ENCODE measurements at regions of chr18 and their contacts with region 1.

Region 1: DNA sequence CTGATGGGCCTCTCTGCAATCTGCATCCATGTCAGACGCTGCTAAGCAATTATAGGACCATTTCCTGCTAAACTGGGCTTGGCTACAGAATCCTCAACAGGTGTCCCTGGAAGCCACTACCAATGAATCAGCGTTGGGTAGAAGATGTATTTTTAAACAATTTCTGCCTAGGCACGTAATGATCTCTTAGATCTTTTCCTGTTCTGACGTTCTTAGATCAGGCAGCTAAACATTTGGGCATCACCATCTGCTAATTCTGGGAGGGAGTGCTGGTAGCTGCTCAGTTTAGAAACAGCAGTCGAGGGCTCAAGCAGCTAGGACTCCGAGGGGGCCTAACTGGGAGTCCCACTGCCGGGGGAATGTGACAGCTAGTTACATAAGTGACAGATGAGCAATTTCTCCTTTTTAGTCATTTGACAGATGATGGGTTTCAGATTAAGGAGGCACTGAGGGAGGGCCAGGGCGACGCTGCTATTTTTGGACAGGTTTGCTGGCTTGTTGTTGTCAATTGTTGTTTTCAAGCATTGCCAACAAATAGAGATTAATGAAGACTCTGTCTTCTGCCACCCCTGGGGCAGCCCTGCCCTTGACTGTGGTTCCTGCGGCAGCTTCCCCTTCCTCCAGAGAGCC is 92.7 kb downstream of the MRO start:
- DNase-seq: no peak
- ATAC-seq: no peak
- H3K4me3 ChIP-seq: no peak overlapping the region
- H3K27ac ChIP-seq: no peak overlapping the region
- H3K4me1 ChIP-seq: no peaks in the 10 kb centered on the region
- H3K27me3 ChIP-seq: no peaks in the 10 kb centered on the region
- CTCF ChIP-seq: no peak
- POLR2A ChIP-seq: no peak
- RAD21 ChIP-seq: no peak

Region 2: DNA sequence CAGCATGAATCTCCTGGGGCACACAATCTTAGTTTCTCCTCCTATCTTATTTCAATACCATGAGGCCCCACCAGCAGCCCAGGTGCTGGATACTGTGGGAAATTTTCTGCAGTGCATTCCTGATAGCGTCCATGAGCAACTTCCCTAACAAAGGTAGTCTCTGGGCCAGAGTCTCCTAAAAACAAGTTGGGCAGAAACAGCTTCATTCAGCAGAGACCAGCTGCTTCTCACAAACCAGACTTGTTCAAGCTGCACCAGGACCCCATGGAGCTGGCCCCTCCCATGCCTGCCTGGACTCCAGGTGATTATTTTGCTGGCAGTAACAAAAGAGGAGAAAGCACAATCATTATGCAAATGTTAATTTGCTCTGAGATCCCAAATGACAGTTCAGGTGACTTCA is 563.6 kb before region 1 on chr18:
- CTCF ChIA-PET with region 1: interaction called, 11 read pairs
- POLR2A ChIA-PET with region 1: no interaction called
- dilution Hi-C with region 1: no loop called
- in situ Hi-C with region 1: no loop called
- intact Hi-C with region 1: no loop called
- DNase-seq: no peak
- ATAC-seq: no peak
- H3K4me3 ChIP-seq: no peak overlapping the region
- H3K27ac ChIP-seq: no peak overlapping the region
- H3K4me1 ChIP-seq: no peaks in the 10 kb centered on the region
- H3K27me3 ChIP-seq: peaks cover 2% of the 10 kb centered on the region; the same call in 1 of the 2 replicates
- CTCF ChIP-seq: no peak
- POLR2A ChIP-seq: no peak
- RAD21 ChIP-seq: no peak

Region 3: DNA sequence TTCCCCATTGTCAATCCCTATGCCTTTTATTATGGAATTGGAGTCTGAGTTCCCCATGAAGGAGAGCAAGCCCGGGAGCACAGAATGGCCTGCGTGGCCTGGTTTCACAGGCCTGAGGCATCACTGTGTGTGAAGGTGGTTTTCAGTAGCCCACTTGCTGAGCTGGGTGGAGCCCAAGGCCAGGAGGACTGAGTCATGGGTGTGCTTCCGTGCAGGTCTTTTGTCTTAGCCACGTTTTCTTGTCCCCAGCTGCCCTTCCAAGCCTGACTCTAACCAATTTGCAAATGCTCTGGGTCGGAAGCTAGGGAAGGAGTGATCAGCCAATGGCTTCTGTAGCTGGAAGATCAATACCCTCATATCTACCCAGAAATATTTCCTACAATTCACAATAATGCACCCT is 48.0 kb before region 1 on chr18:
- CTCF ChIA-PET with region 1: no interaction called
- POLR2A ChIA-PET with region 1: no interaction called
- dilution Hi-C with region 1: no loop called
- in situ Hi-C with region 1: no loop called
- intact Hi-C with region 1: loop called (anchors 2 kb)
- DNase-seq: no peak
- ATAC-seq: no peak
- H3K4me3 ChIP-seq: no peak overlapping the region
- H3K27ac ChIP-seq: no peak overlapping the region
- H3K4me1 ChIP-seq: no peaks in the 10 kb centered on the region
- H3K27me3 ChIP-seq: no peaks in the 10 kb centered on the region
- CTCF ChIP-seq: no peak
- POLR2A ChIP-seq: no peak
- RAD21 ChIP-seq: no peak

Measured in IMR-90 (cell line).